Activated T-helper 1 cell treated with anti-CD3 and anti-CD28 coated beads, Interleukin-12 subunit alpha, Interleukin-12 subunit beta, Interleukin-2, Interleukin-4 antibody, amounts not matched to agents 30 ng/mL and 10 ng/mL and 1 ng/mL, durations not matched to agents 14 hours and 24 hours and 36 hours (primary cell): ENCODE measurements at regions of chr1 and their contacts with region 1.

Region 1: DNA sequence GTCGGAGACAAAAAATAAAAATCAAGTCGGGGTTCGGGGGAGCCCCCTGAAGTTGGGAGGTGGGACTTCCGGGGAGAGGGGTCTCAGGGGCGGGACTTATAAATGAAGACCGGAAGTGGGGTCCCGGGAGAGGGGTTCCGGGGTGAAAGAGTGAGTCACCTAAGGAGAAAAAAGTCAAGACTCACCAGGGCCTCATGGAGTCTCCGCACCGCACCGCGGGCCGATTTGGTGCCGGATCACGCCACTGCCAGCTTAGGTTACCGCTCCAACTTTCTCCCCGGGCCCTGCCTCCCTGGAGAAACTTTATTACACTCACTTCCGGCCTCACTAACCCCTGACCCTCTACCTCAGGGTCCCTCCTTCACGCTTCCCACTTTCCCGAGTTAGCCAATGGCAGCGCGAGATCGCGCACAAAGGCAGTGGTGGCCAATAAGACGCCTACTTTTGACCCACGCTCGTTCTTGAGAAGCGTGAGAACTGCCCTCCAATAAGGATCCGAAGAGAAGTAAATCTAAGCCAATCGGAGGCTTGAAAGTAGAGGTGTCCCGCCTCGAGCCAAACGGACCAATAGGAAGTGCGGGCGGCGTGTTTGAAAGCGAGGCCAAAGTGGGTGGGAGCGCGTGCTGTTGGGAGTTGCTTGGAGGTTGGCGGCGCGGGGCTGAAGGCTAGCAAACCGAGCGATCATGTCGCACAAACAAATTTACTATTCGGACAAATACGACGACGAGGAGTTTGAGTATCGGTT is at the start of gene CKS1B:
- DNase-seq: peak; percentile 95
- H3K4me3 Mint-ChIP-seq: no peak within 1 kb of the TSS
- H3K27ac Mint-ChIP-seq: no peak within 1 kb of the TSS
- H3K4me1 Mint-ChIP-seq: peaks cover 36% of the 10 kb centered on the region
- H3K27me3 Mint-ChIP-seq: no peaks in the 10 kb centered on the region
- total RNA-seq, gene CKS1B: 151 and 158 TPM in 2 replicates

Region 2: GRCh38 chr1:154955718-154956543 is 18.3 kb before region 1 on chr1 and contains the start of gene PBXIP1:
- intact Hi-C with region 1: loop called (anchors 1 kb)
- DNase-seq: peak; percentile 86
- H3K4me3 Mint-ChIP-seq: peak within 1 kb of the TSS; percentile 94
- H3K27ac Mint-ChIP-seq: peak within 1 kb of the TSS; percentile 100
- H3K4me1 Mint-ChIP-seq: peaks cover 65% of the 10 kb centered on the region
- H3K27me3 Mint-ChIP-seq: peaks cover 2% of the 10 kb centered on the region
- total RNA-seq, gene PBXIP1: 25.1 and 27.9 TPM in 2 replicates

Region 3: GRCh38 chr1:154989195-154989860 is 15.1 kb after region 1 on chr1:
- intact Hi-C with region 1: no loop called
- DNase-seq: no peak
- H3K4me3 Mint-ChIP-seq: no peak overlapping the region
- H3K27ac Mint-ChIP-seq: peak overlapping the region; percentile 54
- H3K4me1 Mint-ChIP-seq: peaks cover 19% of the 10 kb centered on the region
- H3K27me3 Mint-ChIP-seq: no peaks in the 10 kb centered on the region

Region 4: GRCh38 chr1:155017041-155017945 is 43.1 kb after region 1 on chr1:
- intact Hi-C with region 1: loop called (anchors 1 kb)
- DNase-seq: peak; percentile 81
- H3K4me3 Mint-ChIP-seq: peak overlapping the region; percentile 69
- H3K27ac Mint-ChIP-seq: peak overlapping the region; percentile 7
- H3K4me1 Mint-ChIP-seq: peaks cover 54% of the 10 kb centered on the region
- H3K27me3 Mint-ChIP-seq: no peaks in the 10 kb centered on the region

Region 5: GRCh38 chr1:155135415-155136028 is 161.3 kb after region 1 on chr1 and contains the start of gene SLC50A1:
- intact Hi-C with region 1: loop called (anchors 2 kb)
- DNase-seq: peak; percentile 91
- H3K4me3 Mint-ChIP-seq: peak within 1 kb of the TSS; percentile 94
- H3K27ac Mint-ChIP-seq: peak within 1 kb of the TSS; percentile 99
- H3K4me1 Mint-ChIP-seq: peaks cover 42% of the 10 kb centered on the region
- H3K27me3 Mint-ChIP-seq: peaks cover 5% of the 10 kb centered on the region
- total RNA-seq, gene SLC50A1: 45.7 and 47.7 TPM in 2 replicates

Region 6: DNA sequence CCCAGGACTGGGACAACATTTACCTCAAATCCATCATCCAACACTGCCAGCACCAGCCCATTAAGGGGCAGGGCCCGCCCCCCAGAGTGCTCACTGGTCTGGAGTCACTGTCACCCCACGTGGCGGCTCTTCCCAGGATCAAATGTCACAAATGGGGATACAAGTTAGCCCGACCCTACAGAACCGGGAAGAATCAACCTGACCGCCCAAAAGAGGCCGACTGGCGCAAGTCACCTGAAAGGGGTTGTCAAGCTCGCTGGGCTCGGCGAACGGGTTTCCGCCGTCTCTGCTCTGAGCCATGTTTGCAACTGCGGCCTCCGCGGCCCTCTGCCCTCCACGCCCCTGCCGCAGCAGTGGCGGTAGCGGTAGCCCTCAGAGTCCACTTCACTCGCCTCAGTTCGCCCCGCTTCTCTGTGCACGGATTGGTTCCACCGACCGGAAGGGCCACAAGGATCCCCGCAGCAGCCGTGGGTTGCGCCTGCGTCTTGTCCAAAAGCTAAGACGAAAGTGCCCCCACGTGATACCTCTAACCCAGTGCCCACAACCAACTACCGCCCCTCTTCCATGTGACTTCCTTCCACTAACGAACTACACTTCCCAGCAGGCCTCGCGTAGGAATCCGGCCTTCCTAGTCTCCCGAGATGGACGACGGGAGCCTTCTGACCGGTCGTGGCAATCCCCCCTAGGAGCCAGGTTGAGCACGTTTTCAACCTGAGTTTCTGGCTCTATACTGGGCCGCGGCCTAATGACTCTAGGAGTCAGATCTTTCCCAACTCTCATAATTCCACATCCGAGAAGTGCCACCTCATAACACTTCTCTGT is 287.8 kb after region 1 on chr1 and contains the start of gene SCAMP3:
- intact Hi-C with region 1: no loop called
- DNase-seq: peak; percentile 88
- H3K4me3 Mint-ChIP-seq: peak within 1 kb of the TSS; percentile 90
- H3K27ac Mint-ChIP-seq: peak within 1 kb of the TSS; percentile 88
- H3K4me1 Mint-ChIP-seq: peaks cover 38% of the 10 kb centered on the region
- H3K27me3 Mint-ChIP-seq: no peaks in the 10 kb centered on the region
- total RNA-seq, gene SCAMP3: 147 and 168 TPM in 2 replicates